PC-3 (cell line): ENCODE measurements at regions of chr4 and their contacts with region 1.

Region 1: DNA sequence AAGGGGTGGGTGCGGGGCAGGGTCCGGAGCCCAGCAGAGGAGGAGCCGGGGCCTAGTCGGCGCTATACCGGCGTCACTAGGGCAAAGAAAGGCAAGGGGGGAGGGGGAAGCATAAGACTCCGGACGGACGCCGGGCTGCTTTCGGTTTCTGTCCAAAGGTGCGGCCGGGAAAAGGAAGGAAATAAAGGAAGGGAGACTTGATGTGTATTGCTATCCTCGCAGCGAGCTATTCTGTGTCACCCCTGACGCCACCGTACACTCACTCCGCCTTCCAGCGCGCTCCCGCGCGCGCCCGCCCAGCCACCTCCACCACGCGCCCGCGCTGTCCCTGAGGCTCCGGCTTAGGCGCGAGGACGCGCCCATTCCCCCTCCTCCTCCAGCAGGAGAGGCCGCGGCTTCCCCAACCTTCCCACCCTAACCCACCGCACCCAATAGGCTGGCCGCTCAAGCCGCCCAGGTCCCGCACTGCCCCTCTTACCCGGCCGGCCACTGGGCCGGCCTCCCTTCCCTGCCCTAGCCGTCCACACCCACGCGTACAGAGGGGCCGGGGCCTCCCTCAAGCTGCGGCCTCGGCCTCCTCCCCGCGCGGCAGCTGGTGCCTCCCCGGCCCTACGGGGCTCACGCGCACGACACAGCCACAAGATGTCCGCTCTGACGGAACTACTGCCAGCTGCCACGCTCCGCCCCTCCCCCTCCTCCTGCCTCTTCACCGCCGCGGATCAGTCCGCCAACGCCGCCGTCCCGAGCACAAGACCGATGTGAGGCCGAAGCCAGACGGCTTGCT is at the start of gene UBE2D3:
- DNase-seq: peak; percentile 81
- ATAC-seq: peak; percentile 37
- H3K4me3 ChIP-seq: peak within 1 kb of the TSS; percentile 93
- H3K27ac ChIP-seq: peak within 1 kb of the TSS; percentile 99
- H3K4me1 ChIP-seq: peaks cover 26% of the 10 kb centered on the region
- H3K27me3 ChIP-seq: no peaks in the 10 kb centered on the region
- CTCF ChIP-seq: no peak
- total RNA-seq, gene UBE2D3: 342 and 435 TPM in 2 replicates

Region 2: GRCh38 chr4:102439236-102439614 is 387.9 kb before region 1 on chr4:
- CTCF ChIA-PET with region 1: no interaction called
- POLR2A ChIA-PET with region 1: no interaction called
- intact Hi-C with region 1: loop called (anchors 10 kb)
- DNase-seq: peak; percentile 78
- ATAC-seq: peak; percentile 68
- H3K4me3 ChIP-seq: no peak overlapping the region
- H3K27ac ChIP-seq: peak overlapping the region; percentile 71
- H3K4me1 ChIP-seq: peaks cover 21% of the 10 kb centered on the region
- H3K27me3 ChIP-seq: no peaks in the 10 kb centered on the region
- CTCF ChIP-seq: no peak

Region 3: GRCh38 chr4:102620697-102621497 is 206.2 kb before region 1 on chr4:
- CTCF ChIA-PET with region 1: interaction called, 4 read pairs
- POLR2A ChIA-PET with region 1: no interaction called
- intact Hi-C with region 1: loop called (anchors 1 kb)
- DNase-seq: peak; percentile 78
- ATAC-seq: peak; percentile 90
- H3K4me3 ChIP-seq: peak overlapping the region; percentile 60
- H3K27ac ChIP-seq: peak overlapping the region; percentile 68
- H3K4me1 ChIP-seq: peaks cover 24% of the 10 kb centered on the region
- H3K27me3 ChIP-seq: no peaks in the 10 kb centered on the region
- CTCF ChIP-seq: peak; percentile 86

Region 4: GRCh38 chr4:102760645-102761295 is 66.3 kb before region 1 on chr4 and contains the start of gene MANBA:
- CTCF ChIA-PET with region 1: no interaction called
- POLR2A ChIA-PET with region 1: no interaction called
- intact Hi-C with region 1: loop called (anchors 2 kb)
- DNase-seq: peak; percentile 77
- ATAC-seq: peak; percentile 90
- H3K4me3 ChIP-seq: peak within 1 kb of the TSS; percentile 95
- H3K27ac ChIP-seq: peak within 1 kb of the TSS; percentile 46
- H3K4me1 ChIP-seq: peaks cover 26% of the 10 kb centered on the region; the same call in 1 of the 2 replicates
- H3K27me3 ChIP-seq: no peaks in the 10 kb centered on the region
- CTCF ChIP-seq: no peak
- total RNA-seq, gene MANBA: 20.9 and 26.7 TPM in 2 replicates

Region 5: DNA sequence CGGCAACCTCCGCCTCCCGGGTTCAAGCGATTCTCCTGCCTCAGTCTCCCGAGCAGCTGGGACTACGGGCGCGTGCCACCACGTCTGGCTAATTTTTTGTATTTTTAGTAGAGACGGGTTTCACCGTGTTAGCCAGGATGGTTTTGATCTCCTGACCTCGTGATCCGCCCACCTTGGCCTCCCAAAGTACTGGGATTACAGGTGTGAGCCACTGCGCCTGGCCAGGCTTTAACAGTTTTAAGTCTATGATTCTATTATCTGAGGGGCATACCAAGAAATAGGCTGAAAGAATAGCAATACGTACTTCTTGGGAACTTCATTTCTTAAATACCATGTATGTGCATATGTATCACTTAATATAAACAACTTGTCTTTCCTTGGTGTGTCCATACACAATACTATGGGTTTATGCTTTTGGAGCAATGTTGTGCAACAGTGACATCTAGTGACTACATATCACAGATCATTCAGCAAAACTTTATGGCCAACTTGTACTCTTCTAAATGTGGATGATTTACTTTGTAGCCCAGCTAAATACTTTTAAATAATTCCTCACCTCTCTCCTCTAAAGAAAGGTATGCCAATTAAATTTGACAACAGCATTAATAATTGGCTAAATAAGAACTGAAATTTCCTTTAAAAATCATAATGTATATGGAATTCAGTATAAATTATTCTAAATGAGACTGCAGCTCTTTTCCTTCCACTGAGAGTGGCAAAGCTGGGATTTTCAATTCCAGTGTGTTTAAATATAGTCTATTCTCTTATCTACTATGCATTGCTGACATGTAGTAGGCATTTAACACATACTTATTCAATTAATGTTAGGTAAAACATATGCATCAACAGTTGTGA is 182.0 kb after region 1 on chr4:
- CTCF ChIA-PET with region 1: interaction called, 3 read pairs
- POLR2A ChIA-PET with region 1: no interaction called
- intact Hi-C with region 1: loop called (anchors 2 kb)
- DNase-seq: peak; percentile 73
- ATAC-seq: peak; percentile 77
- H3K4me3 ChIP-seq: no peak overlapping the region
- H3K27ac ChIP-seq: no peak overlapping the region
- H3K4me1 ChIP-seq: peaks cover 12% of the 10 kb centered on the region
- H3K27me3 ChIP-seq: no peaks in the 10 kb centered on the region
- CTCF ChIP-seq: peak; percentile 80

Region 6: DNA sequence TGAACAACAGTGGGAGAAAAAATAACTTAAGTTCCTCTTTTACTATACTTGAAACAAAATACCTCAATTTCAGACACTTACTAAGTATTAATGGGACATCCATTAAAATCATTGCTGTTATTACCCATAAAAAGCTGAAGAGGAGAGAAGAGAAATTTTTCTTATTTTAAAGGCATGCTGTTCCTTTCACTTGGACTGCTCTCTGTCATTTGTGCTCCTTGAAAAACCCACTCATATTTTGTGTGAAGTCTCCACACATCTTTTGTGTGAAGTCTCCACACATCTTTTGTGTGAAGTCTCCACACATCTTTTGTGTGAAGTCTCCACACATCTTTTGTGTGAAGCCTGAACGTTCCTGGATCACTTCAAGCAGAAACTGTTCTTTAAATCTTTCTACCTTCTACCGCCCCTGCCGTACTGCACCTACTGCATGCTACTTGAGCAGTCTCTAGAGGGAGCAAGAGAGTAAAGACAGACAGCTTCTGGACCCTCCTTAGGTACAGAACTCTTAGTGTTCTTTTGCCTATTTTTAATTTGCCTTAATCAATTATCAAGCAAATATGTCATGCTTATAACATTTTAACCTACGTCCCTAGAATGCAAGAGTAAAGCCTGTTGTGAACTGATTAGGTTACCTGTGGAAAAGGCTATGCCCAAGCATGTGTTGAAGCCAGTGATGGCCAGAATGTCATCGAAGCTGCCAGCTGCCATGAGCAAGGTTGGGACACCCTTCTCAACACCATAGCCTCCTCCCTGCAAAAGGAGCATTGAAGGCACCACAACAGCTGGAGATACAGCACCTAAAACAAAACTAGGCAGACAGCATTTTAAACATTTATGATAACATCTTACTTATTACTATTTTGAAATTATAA is 219.6 kb after region 1 on chr4:
- CTCF ChIA-PET with region 1: no interaction called
- POLR2A ChIA-PET with region 1: interaction called, 24 read pairs
- intact Hi-C with region 1: no loop called
- DNase-seq: peak; percentile 59
- ATAC-seq: peak; percentile 87
- H3K4me3 ChIP-seq: no peak overlapping the region
- H3K27ac ChIP-seq: no peak overlapping the region
- H3K4me1 ChIP-seq: no peaks in the 10 kb centered on the region
- H3K27me3 ChIP-seq: no peaks in the 10 kb centered on the region
- CTCF ChIP-seq: peak; percentile 75

Region 7: DNA sequence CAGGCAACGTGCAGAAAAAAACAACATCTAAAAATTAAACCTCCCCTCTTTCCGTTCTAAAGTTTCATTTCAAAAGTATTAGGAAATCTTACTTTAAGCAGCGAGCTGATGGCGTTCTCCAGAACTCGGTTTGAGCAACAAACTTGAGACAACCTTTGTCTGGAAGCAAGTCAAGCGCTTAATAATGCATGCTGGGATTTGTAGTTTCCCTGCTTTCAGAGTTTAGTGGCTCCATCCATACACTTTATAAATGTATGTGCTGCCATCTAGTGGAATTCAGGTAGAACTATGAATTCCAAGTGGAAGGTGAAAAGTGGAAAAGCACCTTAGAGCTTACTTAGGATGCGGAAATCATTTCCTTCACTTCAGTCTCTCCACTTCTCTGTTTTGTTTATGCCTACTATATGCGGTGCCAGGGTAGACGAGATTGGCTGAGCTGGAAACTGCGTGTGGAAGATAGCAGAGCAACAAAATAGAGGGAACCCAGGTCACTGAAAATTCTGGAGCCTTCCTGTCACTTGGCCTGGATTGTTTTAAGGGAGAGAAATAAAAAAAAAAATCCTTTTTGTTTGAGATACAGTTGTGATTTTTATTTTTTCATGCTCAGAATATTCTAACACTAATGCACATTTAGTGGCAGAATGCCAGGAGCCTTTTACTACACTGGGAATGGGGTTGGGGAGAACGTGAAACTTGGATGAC is 272.8 kb after region 1 on chr4 and contains the start of gene BDH2:
- CTCF ChIA-PET with region 1: no interaction called
- POLR2A ChIA-PET with region 1: no interaction called
- intact Hi-C with region 1: loop called (anchors 10 kb)
- DNase-seq: peak; percentile 89
- ATAC-seq: peak; percentile 93
- H3K4me3 ChIP-seq: peak within 1 kb of the TSS; percentile 68
- H3K27ac ChIP-seq: no peak within 1 kb of the TSS
- H3K4me1 ChIP-seq: peaks cover 9% of the 10 kb centered on the region; the same call in 1 of the 2 replicates
- H3K27me3 ChIP-seq: no peaks in the 10 kb centered on the region
- CTCF ChIP-seq: peak; percentile 74
- total RNA-seq, gene BDH2: 10.5 and 16.0 TPM in 2 replicates

Region 8: DNA sequence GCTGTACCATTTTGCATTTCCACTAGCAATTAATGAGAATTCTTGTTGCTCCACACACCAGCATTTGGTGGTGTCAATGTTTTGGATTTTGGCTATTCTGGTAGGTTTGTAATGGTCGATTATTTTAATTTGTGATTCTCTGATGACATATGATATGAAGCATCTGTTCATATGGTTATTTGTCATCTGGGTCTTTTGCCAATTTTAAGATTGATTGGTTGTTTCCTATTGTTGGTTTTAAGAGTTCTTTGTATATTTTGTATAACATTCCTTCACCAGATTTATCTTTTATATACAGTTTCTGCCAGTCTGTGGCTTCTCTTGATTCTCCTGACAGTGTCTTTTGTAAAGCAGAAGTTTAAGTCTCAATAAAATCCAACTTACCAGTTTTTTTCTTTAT is 291.1 kb after region 1 on chr4:
- CTCF ChIA-PET with region 1: no interaction called
- POLR2A ChIA-PET with region 1: no interaction called
- intact Hi-C with region 1: no loop called
- DNase-seq: no peak
- ATAC-seq: no peak
- H3K4me3 ChIP-seq: no peak overlapping the region
- H3K27ac ChIP-seq: no peak overlapping the region
- H3K4me1 ChIP-seq: no peaks in the 10 kb centered on the region
- H3K27me3 ChIP-seq: no peaks in the 10 kb centered on the region
- CTCF ChIP-seq: no peak